Caco-2 (cell line): ENCODE measurements at regions of chr3 and their contacts with region 1.

Region 1: DNA sequence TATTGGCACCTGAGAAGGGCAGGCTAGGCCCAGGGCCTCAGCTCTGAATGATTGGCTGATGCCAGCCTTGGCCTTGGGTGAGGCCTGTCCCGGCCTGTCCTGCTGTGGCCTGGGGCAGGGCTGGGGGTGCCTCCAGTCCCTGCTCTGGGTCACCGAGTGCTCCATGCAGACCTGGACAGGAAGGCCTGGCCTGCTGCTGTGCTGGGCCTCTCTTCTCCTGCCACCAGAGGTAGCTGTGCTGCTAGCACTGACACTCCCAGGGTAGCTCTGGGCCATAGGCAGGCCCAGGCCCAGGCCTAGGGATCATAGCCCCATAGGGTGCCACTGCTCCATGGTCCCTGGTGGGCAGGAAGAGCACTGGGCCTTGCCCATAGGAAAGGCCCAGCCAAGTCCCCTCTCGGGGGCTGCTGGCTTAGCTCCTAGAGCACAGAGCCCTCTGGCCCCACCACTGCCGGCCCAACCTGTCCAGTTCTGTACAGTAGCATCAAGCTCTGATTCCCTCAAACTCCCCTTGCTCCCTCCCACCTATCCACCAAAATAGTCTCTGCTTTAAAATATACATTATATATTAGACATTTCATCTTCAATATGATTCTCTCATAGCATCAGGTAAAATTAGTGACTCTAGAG is 18.2 kb downstream of the ABTB1 start:
- DNase-seq: peak; percentile 70 to 81
- H3K4me3 ChIP-seq: no peak overlapping the region
- H3K4me3 Mint-ChIP-seq: no peak overlapping the region
- H3K27ac Mint-ChIP-seq: no peak overlapping the region
- H3K4me1 ChIP-seq: peaks cover 27% of the 10 kb centered on the region
- H3K4me1 Mint-ChIP-seq: no peaks in the 10 kb centered on the region
- H3K27me3 ChIP-seq: no peaks in the 10 kb centered on the region
- H3K27me3 Mint-ChIP-seq: no peaks in the 10 kb centered on the region
- CTCF ChIP-seq: peak; percentile 35 to 73

Region 2: DNA sequence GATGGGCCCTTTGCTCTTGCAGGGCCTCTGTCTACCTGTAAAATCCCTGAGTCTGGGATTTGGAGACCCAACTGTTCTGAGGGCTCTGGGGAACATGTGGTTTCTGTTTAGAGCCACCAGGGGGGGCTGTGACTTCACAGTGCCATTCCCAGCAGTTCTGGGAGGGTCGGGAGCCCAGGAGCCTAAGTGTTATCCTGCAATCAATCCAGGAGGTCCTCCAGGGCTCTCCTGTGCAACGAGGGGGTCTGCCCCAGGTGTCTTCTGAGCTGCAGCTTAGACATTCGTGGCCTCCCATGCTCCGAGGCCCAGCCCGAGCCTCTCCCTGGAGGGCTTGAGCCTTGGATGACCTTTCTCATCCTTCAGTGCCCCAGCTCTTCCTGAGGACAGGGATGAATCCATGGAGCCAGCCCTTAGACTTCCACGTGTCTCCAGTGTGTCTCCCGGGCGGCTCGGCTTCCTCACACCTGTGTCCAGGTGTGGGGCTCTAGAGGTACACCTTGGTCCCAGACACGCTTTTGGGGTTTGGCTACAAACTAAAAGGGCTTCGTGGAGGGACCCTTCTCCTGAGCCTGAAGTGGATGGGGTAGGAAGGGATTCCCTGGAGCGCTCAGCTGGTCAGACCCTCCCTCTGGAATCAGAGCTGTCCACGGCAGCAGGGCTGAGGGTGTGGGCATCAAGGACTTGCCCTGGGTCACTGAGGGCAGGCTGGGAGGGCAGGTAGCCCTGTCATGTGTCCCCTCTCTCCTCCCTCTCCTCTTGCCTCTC is 38.5 kb before region 1 on chr3:
- CTCF ChIA-PET with region 1: no interaction called
- POLR2A ChIA-PET with region 1: no interaction called
- intact Hi-C with region 1: loop called (anchors 5 kb)
- DNase-seq: peak in 1 of 2 experiments; percentile 69
- H3K4me3 ChIP-seq: no peak overlapping the region
- H3K4me3 Mint-ChIP-seq: no peak overlapping the region
- H3K27ac Mint-ChIP-seq: peak overlapping the region; percentile 41
- H3K4me1 ChIP-seq: no peaks in the 10 kb centered on the region
- H3K4me1 Mint-ChIP-seq: no peaks in the 10 kb centered on the region
- H3K27me3 ChIP-seq: no peaks in the 10 kb centered on the region
- H3K27me3 Mint-ChIP-seq: no peaks in the 10 kb centered on the region
- CTCF ChIP-seq: peak; percentile 71 to 77

Region 3: DNA sequence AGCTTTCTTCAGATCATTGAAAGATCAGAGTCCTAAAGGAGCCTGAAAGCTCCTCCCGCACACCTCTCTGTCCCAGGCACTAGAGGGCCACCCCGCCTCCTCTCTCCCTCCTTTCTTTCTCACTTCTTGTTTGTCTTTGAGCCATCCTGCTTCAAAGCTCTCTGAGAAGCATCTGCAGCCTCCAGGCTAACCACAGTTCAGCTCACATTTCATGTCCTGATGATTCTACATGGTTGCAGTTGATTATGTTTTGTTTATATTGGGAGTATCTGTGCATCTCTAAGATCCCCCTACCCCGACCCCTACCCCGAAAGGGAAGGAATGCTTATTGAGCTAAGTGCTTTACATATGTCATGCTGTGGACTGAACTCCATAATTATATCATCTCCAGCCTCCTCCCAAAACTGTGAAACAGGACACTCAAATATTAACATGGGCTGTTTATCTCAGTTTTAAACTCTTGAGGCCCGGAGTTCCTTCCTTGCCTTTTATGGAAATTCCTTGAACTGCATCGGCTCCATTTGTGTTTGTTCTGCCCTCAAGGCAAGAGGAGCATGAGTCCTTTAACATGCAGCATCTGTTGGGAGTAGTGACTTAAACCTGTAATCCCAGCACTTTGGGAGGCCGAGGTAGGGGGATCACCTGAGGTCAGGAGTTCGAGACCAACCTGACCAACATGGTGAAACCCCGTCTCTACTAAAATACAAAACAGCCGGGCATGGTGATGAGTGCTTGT is 100.4 kb after region 1 on chr3:
- CTCF ChIA-PET with region 1: interaction called, 10 read pairs
- POLR2A ChIA-PET with region 1: no interaction called
- intact Hi-C with region 1: no loop called
- DNase-seq: peak; percentile 68 to 72
- H3K4me3 ChIP-seq: no peak overlapping the region
- H3K4me3 Mint-ChIP-seq: no peak overlapping the region
- H3K27ac Mint-ChIP-seq: peak overlapping the region; percentile 77
- H3K4me1 ChIP-seq: peaks cover 25% of the 10 kb centered on the region
- H3K4me1 Mint-ChIP-seq: peaks cover 16% of the 10 kb centered on the region
- H3K27me3 ChIP-seq: no peaks in the 10 kb centered on the region
- H3K27me3 Mint-ChIP-seq: no peaks in the 10 kb centered on the region
- CTCF ChIP-seq: peak in 1 of 2 experiments; percentile 71

Region 4: GRCh38 chr3:127831723-127832172 is 140.8 kb after region 1 on chr3:
- CTCF ChIA-PET with region 1: interaction called, 10 read pairs
- POLR2A ChIA-PET with region 1: no interaction called
- intact Hi-C with region 1: loop called (anchors 2 kb)
- DNase-seq: peak in 1 of 2 experiments; percentile 52
- H3K4me3 ChIP-seq: no peak overlapping the region
- H3K4me3 Mint-ChIP-seq: no peak overlapping the region
- H3K27ac Mint-ChIP-seq: no peak overlapping the region
- H3K4me1 ChIP-seq: no peaks in the 10 kb centered on the region
- H3K4me1 Mint-ChIP-seq: no peaks in the 10 kb centered on the region
- H3K27me3 ChIP-seq: no peaks in the 10 kb centered on the region
- H3K27me3 Mint-ChIP-seq: no peaks in the 10 kb centered on the region
- CTCF ChIP-seq: peak; percentile 66 to 74

Region 5: DNA sequence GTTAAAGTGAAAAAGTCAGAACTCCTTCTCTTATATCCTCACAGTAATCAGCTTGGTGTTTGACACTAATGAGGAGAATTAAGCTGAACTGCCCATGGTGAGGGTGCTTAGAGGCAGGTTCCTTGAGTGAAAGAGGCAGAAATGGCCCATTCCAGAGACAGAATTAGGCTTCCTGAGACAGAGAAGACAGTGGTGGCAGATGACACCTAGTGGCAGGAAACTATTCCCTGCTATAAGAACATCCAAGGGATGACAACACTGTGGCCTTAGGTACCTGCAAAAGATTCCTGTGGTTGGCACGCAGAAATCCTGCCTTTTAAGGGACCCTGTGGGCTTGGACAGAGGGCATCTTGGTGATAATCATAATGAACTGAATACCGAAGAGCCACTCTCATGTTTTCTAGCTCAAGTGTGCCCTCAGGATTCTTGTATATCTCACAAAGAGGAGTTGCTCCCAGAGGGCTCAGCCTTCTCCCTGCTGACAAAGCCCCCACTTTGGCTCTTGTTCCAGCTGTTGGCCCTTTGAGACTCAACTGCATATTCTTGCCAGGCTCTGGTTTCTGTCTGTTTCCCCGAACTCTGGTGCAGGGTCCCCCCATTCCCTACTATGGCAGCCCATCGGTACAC is 280.1 kb after region 1 on chr3:
- CTCF ChIA-PET with region 1: no interaction called
- POLR2A ChIA-PET with region 1: no interaction called
- intact Hi-C with region 1: loop called (anchors 2 kb)
- DNase-seq: peak in 1 of 2 experiments; percentile 53
- H3K4me3 ChIP-seq: no peak overlapping the region
- H3K4me3 Mint-ChIP-seq: no peak overlapping the region
- H3K27ac Mint-ChIP-seq: no peak overlapping the region
- H3K4me1 ChIP-seq: no peaks in the 10 kb centered on the region
- H3K4me1 Mint-ChIP-seq: no peaks in the 10 kb centered on the region
- H3K27me3 ChIP-seq: 0 out of 2 replicates have a peak, but pooled peaks cover 2% of the 10 kb centered on the region
- H3K27me3 Mint-ChIP-seq: peaks cover 11% of the 10 kb centered on the region
- CTCF ChIP-seq: peak; percentile 57 to 81